Body of pancreas (tissue), 4 donors: ENCODE measurements at regions of chr7 and their contacts with region 1.

Region 1: DNA sequence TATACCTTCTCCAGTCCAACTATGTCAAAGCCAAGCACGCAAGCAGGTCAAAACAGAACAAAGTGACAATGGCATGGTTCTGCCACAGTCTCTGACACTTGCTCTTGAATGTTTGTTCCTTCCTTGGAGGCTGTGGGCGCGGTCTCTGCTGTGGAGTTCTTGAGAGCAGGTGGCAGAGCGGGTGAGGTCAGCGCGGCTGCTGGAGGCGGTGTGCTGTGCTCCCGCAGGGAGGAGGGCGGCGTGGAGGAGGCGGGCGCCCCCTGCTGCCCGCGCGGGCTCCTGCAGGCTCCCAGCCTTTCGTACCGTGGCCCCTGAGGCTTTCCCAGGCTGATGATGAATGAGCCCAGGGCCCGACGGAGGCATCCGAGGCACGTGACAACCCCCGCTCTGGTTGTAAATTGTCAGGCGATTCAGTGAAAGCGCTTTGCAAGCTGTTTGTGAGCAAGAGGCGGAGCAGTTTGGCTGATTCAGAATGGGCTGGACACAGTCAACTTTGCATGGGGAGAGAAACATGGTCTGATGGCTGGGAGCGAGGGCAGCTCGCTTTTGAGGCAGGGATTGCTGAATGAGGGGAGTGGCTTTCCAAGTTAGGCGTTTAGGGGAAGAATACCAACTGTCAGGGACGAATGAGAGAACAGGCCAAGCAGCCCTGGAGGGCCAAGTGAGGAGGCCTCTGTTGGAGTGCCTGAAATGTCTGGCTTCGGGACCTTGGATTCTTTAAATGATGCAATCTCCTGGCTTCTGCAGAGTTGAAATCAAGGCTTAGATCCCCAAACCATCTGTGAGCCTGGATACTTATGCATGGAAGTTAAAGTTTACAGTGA is 46.6 kb downstream of the CDHR3 start:
- DNase-seq: peak; percentile 85 to 88 (median 86)
- ATAC-seq: peak; percentile 94
- H3K4me3 ChIP-seq: no peak overlapping the region
- H3K27ac ChIP-seq: peak overlapping the region in 1 of 4 donors; percentile 26
- H3K4me1 ChIP-seq: peaks cover 9% of the 10 kb centered on the region
- H3K27me3 ChIP-seq: no peaks in the 10 kb centered on the region
- CTCF ChIP-seq: peak; percentile 94 to 99 (median 97)
- POLR2A ChIP-seq: no peak

Region 2: DNA sequence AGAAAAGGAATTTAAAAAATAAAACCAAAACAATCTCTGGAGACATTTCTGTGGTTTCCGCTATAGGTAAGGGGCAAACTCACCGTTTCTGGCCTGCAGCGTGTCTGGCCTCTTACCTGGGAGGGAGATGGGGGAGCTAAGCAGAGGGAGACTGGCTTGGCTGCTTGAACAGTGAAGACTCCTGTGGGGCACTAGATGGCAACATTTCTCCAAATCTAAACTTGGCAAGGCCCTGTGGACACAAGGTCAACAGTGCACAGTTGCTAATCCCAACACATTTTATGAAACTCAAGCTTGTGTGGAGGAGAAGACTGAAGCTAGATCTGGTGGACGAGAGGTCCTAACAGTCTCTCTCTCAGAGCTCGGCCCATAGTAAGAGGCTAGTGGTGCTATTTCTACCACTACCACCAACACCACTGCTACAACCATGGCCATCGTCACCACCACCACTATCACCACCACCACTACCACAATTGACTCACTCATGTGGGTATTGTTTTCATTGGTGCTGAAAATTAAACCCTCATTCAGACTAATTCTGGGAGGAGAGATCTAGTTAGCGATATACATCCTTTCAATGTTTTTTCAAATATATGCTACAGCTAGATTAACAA is 74.9 kb before region 1 on chr7:
- intact Hi-C with region 1: loop called (anchors 5 kb)
- DNase-seq: peak; percentile 57 to 77 (median 66)
- ATAC-seq: peak; percentile 91
- H3K4me3 ChIP-seq: no peak overlapping the region
- H3K27ac ChIP-seq: peak overlapping the region in 3 of 4 donors; percentile 24 to 46 (median 45)
- H3K4me1 ChIP-seq: peaks cover 14% of the 10 kb centered on the region
- H3K27me3 ChIP-seq: no peaks in the 10 kb centered on the region
- CTCF ChIP-seq: peak; percentile 25 to 74 (median 65)
- POLR2A ChIP-seq: no peak

Region 3: DNA sequence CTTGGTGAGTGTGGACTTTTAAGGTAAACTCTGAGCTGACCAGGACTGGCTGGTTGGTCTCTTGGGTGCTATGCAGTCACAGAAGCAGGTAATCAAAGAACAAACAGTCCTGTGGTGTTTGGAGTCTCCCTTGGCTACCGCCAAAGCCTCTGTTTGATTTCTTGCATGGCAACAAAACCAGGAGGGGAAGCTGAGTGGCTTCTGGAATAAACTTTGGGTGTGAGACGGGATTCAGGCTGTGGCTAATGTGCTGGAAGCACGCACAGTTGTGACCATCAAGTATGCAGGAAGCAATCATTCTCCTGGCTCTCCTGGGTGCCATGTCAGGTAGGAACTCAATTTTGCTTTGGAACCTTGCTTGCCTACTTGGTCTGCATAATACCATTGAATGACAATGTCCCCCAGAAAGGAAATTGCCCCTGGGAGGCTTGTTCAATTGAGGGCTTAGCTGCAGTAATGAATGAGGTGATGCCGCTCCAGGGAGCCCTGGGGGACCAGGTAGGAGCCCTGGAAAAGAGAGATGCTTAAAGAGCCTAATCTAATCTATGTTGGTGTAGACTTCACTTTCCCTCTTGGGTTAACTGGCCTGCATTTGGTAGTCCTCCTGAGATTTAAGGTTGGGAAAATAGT is 46.5 kb before region 1 on chr7 and contains the start of gene CDHR3:
- intact Hi-C with region 1: no loop called
- DNase-seq: peak; percentile 45 to 76 (median 54)
- ATAC-seq: peak; percentile 95
- H3K4me3 ChIP-seq: no peak within 1 kb of the TSS
- H3K27ac ChIP-seq: peak within 1 kb of the TSS in 2 of 4 donors; percentile 31 to 57
- H3K4me1 ChIP-seq: peaks cover 12% of the 10 kb centered on the region
- H3K27me3 ChIP-seq: no peaks in the 10 kb centered on the region
- CTCF ChIP-seq: no peak
- POLR2A ChIP-seq: peak in 1 of 3 donors; percentile 41
- total RNA-seq, gene CDHR3: 1.6 to 14.8 TPM